G401 (cell line): ENCODE measurements at regions of chr4 and their contacts with region 1.

Region 1: GRCh38 chr4:102620697-102621497 is 119.7 kb downstream of the NFKB1 start:
- DNase-seq: peak; percentile 88

Region 2: DNA sequence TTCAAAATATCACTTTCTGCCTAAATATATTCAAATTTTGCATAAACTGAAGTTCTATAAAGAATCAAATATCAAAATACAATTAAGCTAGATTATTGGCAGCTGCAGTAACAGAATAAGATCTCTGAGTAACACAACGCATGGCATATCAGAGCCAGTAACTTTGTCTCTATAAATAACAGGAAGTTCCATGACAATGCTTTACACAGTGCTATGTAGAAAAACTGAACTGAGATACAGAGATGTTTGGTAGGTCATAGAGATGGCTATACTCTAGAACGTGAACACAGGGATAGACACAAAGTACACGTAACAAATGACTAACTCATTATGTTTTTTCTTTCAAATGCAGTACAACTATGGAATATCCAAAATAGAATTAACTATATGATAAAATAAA is 188.3 kb after region 1 on chr4:
- in situ Hi-C with region 1: loop called (anchors 10 kb)
- DNase-seq: no peak

Region 3: GRCh38 chr4:103019308-103020124 is 398.6 kb after region 1 on chr4 and contains the start of gene SLC9B1:
- in situ Hi-C with region 1: loop called (anchors 25 kb)
- DNase-seq: peak; percentile 91
- total RNA-seq, gene SLC9B1: not detected in 2 replicates